Natural killer cell (primary cell): ENCODE measurements at regions of chr9 and their contacts with region 1.

Region 1: GRCh38 chr9:110283751-110284150 is 27.4 kb upstream of the TXN start:
- DNase-seq: no peak
- ATAC-seq: no peak
- H3K4me3 ChIP-seq: no peak overlapping the region
- H3K4me3 Mint-ChIP-seq: no peak overlapping the region
- H3K27ac ChIP-seq: no peak overlapping the region
- H3K27ac Mint-ChIP-seq: no peak overlapping the region
- H3K4me1 ChIP-seq: no peaks in the 10 kb centered on the region
- H3K4me1 Mint-ChIP-seq: no peaks in the 10 kb centered on the region
- H3K27me3 ChIP-seq: peaks cover 2% of the 10 kb centered on the region
- H3K27me3 Mint-ChIP-seq: peaks cover 0 to 10% of the 10 kb centered on the region in 2 donors
- CTCF ChIP-seq: no peak

Region 2: GRCh38 chr9:110261631-110262030 is 22.1 kb before region 1 on chr9:
- intact Hi-C with region 1: loop called (anchors 2 kb)
- DNase-seq: no peak
- ATAC-seq: no peak
- H3K4me3 ChIP-seq: no peak overlapping the region
- H3K4me3 Mint-ChIP-seq: no peak overlapping the region
- H3K27ac ChIP-seq: no peak overlapping the region
- H3K27ac Mint-ChIP-seq: no peak overlapping the region
- H3K4me1 ChIP-seq: peaks cover 10% of the 10 kb centered on the region
- H3K4me1 Mint-ChIP-seq: peaks cover 9 to 10% of the 10 kb centered on the region in 2 donors
- H3K27me3 ChIP-seq: no peaks in the 10 kb centered on the region
- H3K27me3 Mint-ChIP-seq: peaks cover 0 to 4% of the 10 kb centered on the region in 2 donors
- CTCF ChIP-seq: no peak

Region 3: GRCh38 chr9:110752766-110753165 is 469.0 kb after region 1 on chr9:
- intact Hi-C with region 1: no loop called
- DNase-seq: no peak
- ATAC-seq: no peak
- H3K4me3 ChIP-seq: no peak overlapping the region
- H3K4me3 Mint-ChIP-seq: no peak overlapping the region
- H3K27ac ChIP-seq: no peak overlapping the region
- H3K27ac Mint-ChIP-seq: no peak overlapping the region
- H3K4me1 ChIP-seq: no peaks in the 10 kb centered on the region
- H3K4me1 Mint-ChIP-seq: no peaks in the 10 kb centered on the region
- H3K27me3 ChIP-seq: no peaks in the 10 kb centered on the region
- H3K27me3 Mint-ChIP-seq: no peaks in the 10 kb centered on the region
- CTCF ChIP-seq: no peak